ENCODE measurements at regions of chr22 and their contacts with region 1.

Region 1: DNA sequence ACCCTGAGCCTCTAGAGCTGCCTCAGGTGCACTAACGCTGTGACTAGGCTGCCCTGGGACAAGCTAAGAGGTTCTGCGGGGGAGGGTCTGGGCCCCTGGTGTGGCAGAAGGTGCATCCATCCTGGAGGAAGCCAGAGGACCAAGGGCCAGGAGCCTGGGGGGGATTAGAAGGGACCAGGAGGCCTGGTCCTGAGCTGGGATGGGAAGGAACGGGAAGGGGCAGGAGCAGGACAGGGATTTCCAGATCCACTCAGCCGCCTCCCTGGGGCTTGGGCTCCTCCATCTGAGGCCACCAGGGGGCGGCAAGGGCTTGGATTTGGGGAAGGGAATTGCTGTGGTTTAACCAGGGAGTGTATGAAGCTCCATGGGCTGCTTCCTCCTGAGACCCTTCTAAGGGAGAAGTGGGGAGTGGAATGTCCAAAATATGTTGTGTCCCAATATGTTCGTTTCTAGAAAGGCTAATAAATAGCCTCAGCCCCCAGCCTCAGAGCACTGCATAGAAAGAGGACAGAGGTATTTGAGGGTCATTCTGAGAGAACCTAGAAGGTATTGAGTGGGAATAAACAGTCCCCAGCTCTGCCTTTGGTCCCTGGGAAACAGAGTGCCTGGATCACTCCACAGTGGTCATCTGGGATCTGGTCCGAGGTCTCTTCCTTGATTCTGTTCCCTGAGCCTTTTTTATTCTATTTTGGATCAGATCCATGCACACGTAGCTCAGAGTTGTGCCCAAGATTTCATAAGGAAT is 17.4 kb upstream of the PRAME start:
- DNase-seq: peak; percentile 81
- H3K4me3 Mint-ChIP-seq: no peak overlapping the region
- H3K27ac Mint-ChIP-seq: no peak overlapping the region
- H3K4me1 Mint-ChIP-seq: no peaks in the 10 kb centered on the region
- H3K27me3 Mint-ChIP-seq: peaks cover 58% of the 10 kb centered on the region
- CTCF ChIP-seq: peak; percentile 74

Region 2: GRCh38 chr22:22463855-22464540 is 112.4 kb before region 1 on chr22:
- CTCF ChIA-PET with region 1: no interaction called
- intact Hi-C with region 1: loop called (anchors 5 kb)
- DNase-seq: peak; percentile 59
- H3K4me3 Mint-ChIP-seq: no peak overlapping the region
- H3K27ac Mint-ChIP-seq: no peak overlapping the region
- H3K4me1 Mint-ChIP-seq: no peaks in the 10 kb centered on the region
- H3K27me3 Mint-ChIP-seq: peaks cover 76% of the 10 kb centered on the region
- CTCF ChIP-seq: peak; percentile 83

Region 3: GRCh38 chr22:22587577-22588188 is 11.3 kb after region 1 on chr22:
- CTCF ChIA-PET with region 1: interaction called, 20 read pairs
- intact Hi-C with region 1: no loop called
- DNase-seq: no peak
- H3K4me3 Mint-ChIP-seq: no peak overlapping the region
- H3K27ac Mint-ChIP-seq: no peak overlapping the region
- H3K4me1 Mint-ChIP-seq: no peaks in the 10 kb centered on the region
- H3K27me3 Mint-ChIP-seq: peaks cover 88% of the 10 kb centered on the region
- CTCF ChIP-seq: no peak

Region 4: DNA sequence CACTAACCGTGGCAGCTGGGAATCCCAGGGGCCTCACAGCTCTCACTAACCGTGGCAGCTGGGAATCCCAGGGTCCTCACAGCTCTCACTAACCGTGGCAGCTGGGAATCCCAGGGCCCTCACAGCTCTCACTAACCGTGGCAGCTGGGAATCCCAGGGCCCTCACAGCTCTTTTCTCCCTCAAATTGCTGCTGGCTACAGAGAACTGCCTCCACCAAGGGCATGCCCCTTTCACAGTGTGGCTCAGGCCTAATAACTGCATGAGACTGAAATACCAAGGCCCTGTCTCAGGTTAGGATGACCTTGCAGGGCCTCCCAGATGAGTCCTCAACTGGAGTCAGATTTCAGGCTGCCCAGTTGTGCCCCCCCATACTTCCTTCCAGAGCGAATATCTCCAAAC is 32.9 kb after region 1 on chr22:
- CTCF ChIA-PET with region 1: no interaction called
- intact Hi-C with region 1: no loop called
- DNase-seq: no peak
- H3K4me3 Mint-ChIP-seq: no peak overlapping the region
- H3K27ac Mint-ChIP-seq: no peak overlapping the region
- H3K4me1 Mint-ChIP-seq: no peaks in the 10 kb centered on the region
- H3K27me3 Mint-ChIP-seq: peaks cover 66% of the 10 kb centered on the region
- CTCF ChIP-seq: no peak

Measured in Calu3 (cell line).